AG04449 (cell line): ENCODE measurements at regions of chr5 and their contacts with region 1.

Region 1: GRCh38 chr5:140244525-140245025 is 58.3 kb downstream of the PFDN1 start:
- DNase-seq: peak; percentile 52
- H3K4me3 ChIP-seq: no peak overlapping the region
- CTCF ChIP-seq: peak; percentile 87

Region 2: GRCh38 chr5:140220032-140220697 is 24.4 kb before region 1 on chr5:
- CTCF ChIA-PET with region 1: interaction called, 137 read pairs
- POLR2A ChIA-PET with region 1: interaction called, 5 read pairs
- DNase-seq: no peak
- H3K4me3 ChIP-seq: no peak overlapping the region
- CTCF ChIP-seq: no peak

Region 3: DNA sequence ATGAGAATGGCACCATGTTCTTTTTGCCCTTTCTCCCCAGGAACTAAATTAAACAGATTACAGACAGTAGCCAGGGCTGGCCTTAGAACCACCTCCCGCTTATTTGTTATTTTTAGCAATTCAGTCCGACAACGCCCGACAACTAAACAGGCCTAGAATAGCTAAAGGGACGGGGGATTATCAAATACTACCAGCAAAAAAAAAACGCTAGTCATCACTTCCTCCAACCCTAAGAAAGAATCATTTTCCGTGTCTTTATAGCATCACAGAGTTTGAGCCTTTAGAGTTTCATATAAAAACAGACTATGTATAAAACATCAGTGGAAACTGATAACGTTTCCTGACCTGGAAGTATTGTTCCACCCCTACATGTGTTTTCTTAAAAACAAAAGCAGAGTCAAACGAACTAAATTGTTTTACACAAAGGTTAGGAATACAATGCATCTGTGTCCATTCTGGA is 23.0 kb after region 1 on chr5:
- CTCF ChIA-PET with region 1: interaction called, 165 read pairs
- POLR2A ChIA-PET with region 1: no interaction called
- DNase-seq: no peak
- H3K4me3 ChIP-seq: no peak overlapping the region
- CTCF ChIP-seq: no peak

Region 4: GRCh38 chr5:140312067-140312790 is 67.7 kb after region 1 on chr5:
- CTCF ChIA-PET with region 1: interaction called, 10 read pairs
- POLR2A ChIA-PET with region 1: no interaction called
- DNase-seq: peak; percentile 68
- H3K4me3 ChIP-seq: no peak overlapping the region
- CTCF ChIP-seq: no peak

Region 5: DNA sequence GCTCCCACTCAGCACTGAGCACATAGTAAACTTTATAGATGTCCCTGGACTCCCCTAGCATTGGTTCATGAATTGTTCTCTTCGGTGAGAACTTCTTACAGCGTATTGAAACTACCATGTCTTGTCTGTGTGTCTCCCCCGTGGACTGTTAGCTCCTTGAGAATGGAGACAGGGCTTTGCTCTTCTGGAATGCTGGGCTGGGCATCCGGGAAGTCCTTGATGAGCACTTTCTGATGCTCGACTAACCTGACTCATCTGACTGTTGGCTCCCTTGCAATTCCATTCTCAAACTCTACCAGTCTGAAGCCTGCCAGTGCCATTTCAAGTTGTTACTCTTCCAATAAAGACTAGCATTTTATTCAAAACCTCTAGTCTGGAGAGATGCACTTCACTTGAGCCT is 73.3 kb after region 1 on chr5:
- CTCF ChIA-PET with region 1: interaction called, 11 read pairs
- POLR2A ChIA-PET with region 1: interaction called, 4 read pairs
- DNase-seq: no peak
- H3K4me3 ChIP-seq: no peak overlapping the region
- CTCF ChIP-seq: no peak

Region 6: GRCh38 chr5:140322751-140323731 is 78.5 kb after region 1 on chr5:
- CTCF ChIA-PET with region 1: interaction called, 27 read pairs
- POLR2A ChIA-PET with region 1: interaction called, 4 read pairs
- DNase-seq: peak; percentile 89
- H3K4me3 ChIP-seq: peak overlapping the region; percentile 21
- CTCF ChIP-seq: no peak

Region 7: GRCh38 chr5:140357726-140358093 is 113.1 kb after region 1 on chr5:
- CTCF ChIA-PET with region 1: interaction called, 1,796 read pairs
- POLR2A ChIA-PET with region 1: interaction called, 7 read pairs
- DNase-seq: no peak
- H3K4me3 ChIP-seq: peak overlapping the region; percentile 32
- CTCF ChIP-seq: peak; percentile 95